ENCODE measurements at regions of chr5 and their contacts with region 1.

Region 1: DNA sequence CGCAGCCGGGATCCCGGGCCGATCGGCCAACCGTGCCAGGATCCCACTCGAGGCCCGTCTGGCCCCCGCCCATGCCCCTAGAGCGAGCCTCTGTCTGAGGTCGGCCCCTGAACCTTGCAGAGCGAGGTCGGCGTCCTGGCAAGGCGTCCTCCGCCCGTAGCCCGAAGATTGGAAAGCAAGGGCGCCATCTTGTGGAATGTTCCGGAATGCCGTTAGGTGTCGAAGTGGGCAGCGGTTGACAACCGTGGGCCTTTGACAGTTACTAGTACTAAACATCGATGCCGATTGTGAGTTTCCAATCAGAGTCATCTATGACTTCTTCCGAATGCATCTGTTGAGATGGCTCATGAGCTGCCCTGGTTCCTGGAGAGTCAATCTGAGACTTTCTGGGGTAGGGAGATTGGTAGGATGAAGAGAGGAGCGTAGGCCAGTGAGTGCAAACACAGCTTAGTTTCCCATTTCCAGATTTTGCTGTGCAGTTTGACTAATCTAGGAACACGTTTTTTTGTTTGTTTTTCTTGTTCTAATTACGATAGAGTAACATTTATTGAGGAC is 923 bp upstream of the PLK2 start:
- DNase-seq: peak; percentile 90 to 92
- H3K4me3 ChIP-seq: peak overlapping the region; percentile 71 to 96 (median 85)
- H3K27ac ChIP-seq: peak overlapping the region; percentile 82 to 95 (median 94)
- H3K4me1 ChIP-seq: peaks cover 0 to 5% of the 10 kb centered on the region in 2 donors
- H3K27me3 ChIP-seq: no peaks in the 10 kb centered on the region
- CTCF ChIP-seq: peak; percentile 33 to 79 (median 70)
- POLR2A ChIP-seq: no peak

Region 2: DNA sequence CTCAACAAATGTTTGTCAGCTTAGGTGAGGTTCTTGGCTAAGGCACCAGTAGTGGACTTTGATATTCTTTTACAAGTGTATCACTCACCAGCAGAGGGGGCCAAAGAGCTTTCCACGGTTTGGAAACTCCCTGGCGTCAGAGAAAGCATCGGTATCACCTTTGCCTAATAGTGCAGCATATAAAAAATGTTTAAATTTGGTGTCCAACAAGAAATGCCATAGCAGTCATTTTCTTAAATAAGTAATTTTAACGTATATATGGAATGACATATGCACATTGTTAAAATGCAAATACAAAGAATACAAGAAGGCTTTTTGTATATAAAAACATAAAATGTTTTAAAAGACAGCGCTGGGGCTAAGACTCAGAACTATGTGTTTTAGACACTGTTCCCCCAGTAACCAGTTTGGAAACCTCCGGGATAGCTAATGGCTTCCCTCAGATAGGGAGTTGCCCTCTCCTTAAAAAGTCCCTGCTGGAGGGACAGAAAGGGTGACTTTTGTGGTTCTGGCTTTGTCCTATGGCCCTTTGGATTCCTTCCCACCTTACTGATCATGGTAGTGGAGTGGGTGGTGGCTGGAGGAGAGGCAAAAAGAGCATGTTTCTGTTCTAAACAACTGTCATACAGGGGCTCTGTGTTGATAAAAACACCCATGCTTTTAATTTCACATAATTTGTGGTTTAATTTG is 1162.4 kb before region 1 on chr5:
- intact Hi-C with region 1: loop called (anchors 5 kb)
- DNase-seq: peak; percentile 79 to 91
- H3K4me3 ChIP-seq: no peak overlapping the region
- H3K27ac ChIP-seq: peak overlapping the region in 1 of 3 donors; percentile 21
- H3K4me1 ChIP-seq: peaks cover 6 to 7% of the 10 kb centered on the region in 2 donors
- H3K27me3 ChIP-seq: no peaks in the 10 kb centered on the region
- CTCF ChIP-seq: peak; percentile 30 to 84 (median 78)
- POLR2A ChIP-seq: no peak

Region 3: DNA sequence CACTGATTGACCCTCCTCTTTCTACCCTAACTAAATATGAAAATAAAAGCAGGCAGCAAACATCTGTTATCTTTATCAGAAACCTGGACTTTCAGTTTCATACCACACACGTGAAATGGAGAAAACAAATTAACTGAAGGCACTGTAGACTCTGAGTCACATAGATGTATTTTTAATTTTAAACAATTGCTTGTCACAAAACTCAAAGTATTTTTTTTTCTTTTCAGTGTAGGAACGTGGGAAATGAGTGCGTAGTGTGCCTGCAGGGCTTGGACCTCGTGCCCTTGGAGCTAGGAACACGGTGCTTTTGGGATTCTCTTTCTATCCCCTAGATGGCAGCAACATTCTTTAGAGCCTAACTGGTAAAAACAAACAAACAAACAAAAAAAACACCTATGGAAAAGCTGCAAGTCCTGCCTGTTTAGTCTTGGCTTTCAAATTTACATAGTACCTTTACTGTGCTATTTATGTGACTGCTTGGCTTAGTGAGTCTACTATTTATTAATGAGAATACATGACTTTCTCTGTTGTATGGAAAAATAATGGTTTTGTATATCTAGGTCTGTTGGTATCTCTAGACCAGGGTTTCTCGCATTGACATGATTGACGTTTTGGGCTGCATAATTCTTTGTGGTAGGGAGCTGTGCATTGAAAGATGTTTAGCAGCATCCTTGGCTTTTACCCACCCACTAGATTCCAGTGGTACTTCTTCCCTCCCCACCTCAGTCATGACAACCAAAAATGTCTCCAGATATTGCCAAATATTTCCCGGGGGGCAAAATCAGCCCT is 961.4 kb before region 1 on chr5:
- intact Hi-C with region 1: loop called (anchors 5 kb)
- DNase-seq: no peak
- H3K4me3 ChIP-seq: no peak overlapping the region
- H3K27ac ChIP-seq: no peak overlapping the region
- H3K4me1 ChIP-seq: no peaks in the 10 kb centered on the region
- H3K27me3 ChIP-seq: no peaks in the 10 kb centered on the region
- CTCF ChIP-seq: peak in 4 of 6 experiments; percentile 35 to 67 (median 50)
- POLR2A ChIP-seq: no peak

Region 4: DNA sequence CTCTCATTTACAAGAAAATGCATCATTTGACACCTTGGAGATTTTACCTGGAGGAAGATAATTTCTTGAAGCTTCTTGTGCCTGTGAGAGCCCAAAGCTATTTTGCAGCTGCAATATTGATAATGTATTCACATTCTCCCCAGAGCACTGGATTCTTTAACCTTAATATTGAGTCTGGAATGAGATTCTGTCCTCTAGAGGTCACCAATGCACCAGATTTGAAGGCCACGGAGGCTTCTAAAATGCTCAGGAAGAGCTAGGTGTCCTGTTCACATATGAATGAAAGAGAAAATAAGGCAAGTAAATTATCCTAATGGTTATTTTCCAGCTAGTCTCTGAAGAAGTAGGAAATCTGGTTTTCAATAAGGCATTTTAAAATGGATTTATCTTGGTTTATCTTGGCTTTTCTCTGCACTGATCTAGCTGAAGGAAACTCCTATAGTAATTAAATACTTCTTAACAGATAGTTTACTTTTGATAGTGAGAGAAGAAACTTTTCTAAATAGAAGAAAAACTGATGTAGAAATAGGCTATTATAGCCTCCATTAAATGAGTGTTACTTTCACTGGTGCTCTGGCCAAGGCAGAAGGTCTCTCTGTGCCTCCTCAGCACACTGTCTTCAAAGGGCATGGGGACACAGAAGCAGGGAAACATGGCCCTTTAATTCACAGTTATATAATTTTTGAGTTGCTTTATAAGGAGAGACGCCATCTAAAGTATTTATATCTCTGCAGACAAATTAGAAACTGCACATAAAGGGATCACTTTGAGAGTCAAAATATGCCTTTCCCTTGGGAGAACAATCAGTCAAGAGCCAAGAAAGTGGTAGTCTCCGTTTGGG is 681.2 kb before region 1 on chr5:
- intact Hi-C with region 1: loop called (anchors 5 kb)
- DNase-seq: peak; percentile 30 to 41
- H3K4me3 ChIP-seq: no peak overlapping the region
- H3K27ac ChIP-seq: no peak overlapping the region
- H3K4me1 ChIP-seq: peaks cover 8 to 9% of the 10 kb centered on the region in 2 donors
- H3K27me3 ChIP-seq: no peaks in the 10 kb centered on the region
- CTCF ChIP-seq: peak in 4 of 6 experiments; percentile 59 to 82 (median 74)
- POLR2A ChIP-seq: no peak

Region 5: GRCh38 chr5:57887851-57888621 is 572.8 kb before region 1 on chr5:
- intact Hi-C with region 1: loop called (anchors 10 kb)
- DNase-seq: peak; percentile 53 to 58
- H3K4me3 ChIP-seq: no peak overlapping the region
- H3K27ac ChIP-seq: no peak overlapping the region
- H3K4me1 ChIP-seq: no peaks in the 10 kb centered on the region
- H3K27me3 ChIP-seq: no peaks in the 10 kb centered on the region
- CTCF ChIP-seq: peak in 5 of 6 experiments; percentile 44 to 80 (median 69)
- POLR2A ChIP-seq: no peak

Region 6: DNA sequence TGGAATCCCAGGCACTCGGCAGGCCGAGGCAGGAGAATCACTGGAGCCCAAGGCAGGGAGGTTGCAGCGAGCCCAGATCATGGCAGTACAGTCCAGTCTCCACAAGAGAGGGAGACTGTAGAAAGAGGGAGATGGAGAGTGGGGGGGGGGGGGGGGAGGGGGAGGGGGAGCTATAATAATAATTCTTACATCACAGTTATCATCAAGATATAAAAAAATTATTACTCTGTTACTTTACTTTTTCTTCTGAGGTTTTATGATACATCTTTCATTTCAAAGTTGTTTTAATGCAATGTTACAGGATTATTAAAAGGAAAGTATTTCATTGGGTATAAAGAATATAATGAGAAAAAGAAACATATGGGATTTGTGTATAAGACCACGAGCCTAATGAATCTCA is 104.2 kb after region 1 on chr5:
- intact Hi-C with region 1: no loop called
- DNase-seq: no peak
- H3K4me3 ChIP-seq: no peak overlapping the region
- H3K27ac ChIP-seq: no peak overlapping the region
- H3K4me1 ChIP-seq: no peaks in the 10 kb centered on the region
- H3K27me3 ChIP-seq: no peaks in the 10 kb centered on the region
- CTCF ChIP-seq: no peak
- POLR2A ChIP-seq: no peak